SK-N-SH (cell line): ENCODE measurements at regions of chr7 and their contacts with region 1.

Region 1: DNA sequence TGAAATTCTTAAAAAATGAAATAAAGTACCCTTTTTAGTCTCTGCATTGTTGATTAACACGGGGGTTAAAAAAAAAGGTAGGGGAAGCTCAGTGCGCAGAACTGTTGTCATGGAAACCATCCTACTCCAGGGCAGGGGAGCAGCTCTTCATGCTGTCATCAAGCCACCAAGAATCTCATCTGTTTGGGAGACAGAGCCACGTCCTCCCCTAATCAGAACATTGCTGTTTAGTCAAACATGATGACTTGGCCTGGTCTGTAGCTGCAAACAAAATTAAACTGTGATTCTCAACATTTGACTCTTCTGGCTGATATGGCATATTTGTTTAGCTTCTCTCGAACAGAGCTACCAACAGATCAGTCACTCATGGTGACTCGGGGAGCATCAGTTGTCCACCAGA is 254.4 kb upstream of the KLF14 start:
- DNase-seq: peak; percentile 48
- H3K4me3 ChIP-seq: no peak overlapping the region
- H3K27ac ChIP-seq: peak overlapping the region in 1 of 2 experiments; percentile 3; a peak in 1 of 4 replicates
- H3K4me1 ChIP-seq: peaks cover 0 to 4% of the 10 kb centered on the region in 2 experiments; a peak in 1 of 4 replicates
- H3K27me3 ChIP-seq: no peaks in the 10 kb centered on the region
- CTCF ChIP-seq: no peak
- EP300 ChIP-seq: no peak
- RAD21 ChIP-seq: no peak

Region 2: GRCh38 chr7:131007394-131008330 is 19.2 kb after region 1 on chr7:
- CTCF ChIA-PET with region 1: interaction called, 105 read pairs
- POLR2A ChIA-PET with region 1: no interaction called
- DNase-seq: peak; percentile 57
- H3K4me3 ChIP-seq: no peak overlapping the region
- H3K27ac ChIP-seq: peak overlapping the region; percentile 93 to 95
- H3K4me1 ChIP-seq: peaks cover 20 to 54% of the 10 kb centered on the region in 2 experiments
- H3K27me3 ChIP-seq: no peaks in the 10 kb centered on the region
- CTCF ChIP-seq: peak; percentile 81
- EP300 ChIP-seq: no peak
- RAD21 ChIP-seq: peak; percentile 73

Region 3: GRCh38 chr7:131087756-131088658 is 99.6 kb after region 1 on chr7:
- CTCF ChIA-PET with region 1: no interaction called
- POLR2A ChIA-PET with region 1: no interaction called
- DNase-seq: no peak
- H3K4me3 ChIP-seq: no peak overlapping the region
- H3K27ac ChIP-seq: no peak overlapping the region
- H3K4me1 ChIP-seq: no peaks in the 10 kb centered on the region
- H3K27me3 ChIP-seq: no peaks in the 10 kb centered on the region
- CTCF ChIP-seq: no peak
- EP300 ChIP-seq: no peak
- RAD21 ChIP-seq: no peak